ENCODE measurements at regions of chr22 and their contacts with region 1.

Region 1: DNA sequence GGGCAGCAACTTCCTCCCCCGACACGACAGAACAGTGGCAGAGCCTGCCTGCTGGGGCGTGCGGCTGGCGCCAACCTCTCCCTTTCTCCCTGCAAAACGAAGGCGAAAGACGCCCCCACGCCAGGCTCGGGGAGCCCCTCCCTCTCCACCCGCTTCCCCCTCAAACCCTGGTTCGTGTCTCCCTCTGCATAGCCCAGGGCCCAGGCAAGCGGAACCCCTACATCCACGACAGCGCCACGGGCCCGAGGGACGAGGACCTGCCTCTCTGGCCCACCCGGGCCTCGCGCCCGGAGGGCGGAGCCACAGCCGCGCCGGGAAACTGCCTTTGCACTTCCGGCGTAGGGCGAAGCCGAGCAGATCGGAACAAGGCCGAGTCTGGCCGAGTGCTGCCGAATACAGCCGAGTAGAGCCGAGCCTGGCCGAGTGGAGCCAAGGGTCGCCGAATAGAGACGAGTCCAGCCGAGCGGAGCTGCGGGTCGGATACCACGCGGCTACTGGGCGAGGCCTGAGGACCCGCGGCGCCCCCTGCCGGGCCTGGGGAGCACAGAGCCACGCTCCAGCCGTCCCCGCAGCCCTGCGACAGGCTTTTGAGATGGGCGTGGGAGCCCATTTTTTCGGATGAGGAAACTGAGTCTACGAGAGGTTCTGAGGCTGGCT is 11.2 kb upstream of the C1QTNF6 start:
- DNase-seq: peak; percentile 98
- H3K4me3 ChIP-seq: peak overlapping the region; percentile 65
- H3K27ac ChIP-seq: peak overlapping the region; percentile 88
- H3K4me1 ChIP-seq: peaks cover 15% of the 10 kb centered on the region
- H3K27me3 ChIP-seq: no peaks in the 10 kb centered on the region
- CTCF ChIP-seq: peak; percentile 77

Region 2: DNA sequence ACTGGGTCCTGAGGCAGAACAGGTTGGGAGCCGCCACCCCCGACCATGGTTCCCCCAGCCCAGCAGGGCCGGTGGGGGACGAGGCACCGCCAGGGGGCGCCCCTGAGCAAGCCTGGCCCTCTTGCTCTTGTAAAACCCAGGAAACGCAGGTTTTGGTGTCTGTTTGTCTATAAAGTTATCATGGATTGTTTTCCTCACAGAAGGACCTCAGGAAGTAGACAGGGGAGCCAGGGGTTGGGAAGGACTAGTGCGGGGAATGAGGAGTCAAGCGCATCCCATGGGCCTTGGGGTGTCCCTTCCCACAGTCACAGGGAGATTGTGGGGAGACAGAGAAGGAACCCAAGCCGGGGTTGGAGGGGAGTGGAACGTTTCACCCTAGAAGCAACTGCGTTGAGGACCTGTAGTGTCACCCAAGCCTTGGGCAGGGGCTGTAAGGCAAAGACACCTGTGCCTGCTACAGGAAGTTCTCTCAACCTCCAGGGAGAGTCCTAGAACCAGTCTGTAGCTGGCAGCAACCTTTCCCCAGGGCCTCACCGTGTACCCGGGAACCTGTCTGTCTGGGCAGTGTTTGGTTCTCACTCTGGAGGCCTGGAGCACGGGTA is 121.2 kb before region 1 on chr22:
- CTCF ChIA-PET with region 1: no interaction called
- POLR2A ChIA-PET with region 1: no interaction called
- intact Hi-C with region 1: loop called (anchors 5 kb)
- DNase-seq: peak; percentile 61
- H3K4me3 ChIP-seq: no peak overlapping the region
- H3K27ac ChIP-seq: no peak overlapping the region
- H3K4me1 ChIP-seq: no peaks in the 10 kb centered on the region
- H3K27me3 ChIP-seq: peaks cover 25% of the 10 kb centered on the region
- CTCF ChIP-seq: peak; percentile 100

Region 3: GRCh38 chr22:37166675-37167066 is 32.6 kb before region 1 on chr22:
- CTCF ChIA-PET with region 1: interaction called, 9 read pairs
- POLR2A ChIA-PET with region 1: no interaction called
- intact Hi-C with region 1: loop called (anchors 1 kb)
- DNase-seq: peak; percentile 75
- H3K4me3 ChIP-seq: no peak overlapping the region
- H3K27ac ChIP-seq: no peak overlapping the region
- H3K4me1 ChIP-seq: no peaks in the 10 kb centered on the region
- H3K27me3 ChIP-seq: no peaks in the 10 kb centered on the region
- CTCF ChIP-seq: peak; percentile 94

Measured in A673 (cell line).